Activated CD8-positive, alpha-beta T cell treated with anti-CD3 and anti-CD28 coated beads, Interleukin-2, amount 10 ng/mL, durations not matched to agents 7 days and 5 days (primary cell): ENCODE measurements at regions of chr5 and their contacts with region 1.

Region 1: GRCh38 chr5:96934708-96935558 is 947 bp upstream of the LNPEP start:
- DNase-seq: peak; percentile 96
- ATAC-seq: peak; percentile 77
- H3K4me3 Mint-ChIP-seq: peak overlapping the region; percentile 88
- H3K27ac Mint-ChIP-seq: peak overlapping the region; percentile 98
- H3K4me1 Mint-ChIP-seq: peaks cover 51% of the 10 kb centered on the region
- H3K27me3 Mint-ChIP-seq: no peaks in the 10 kb centered on the region

Region 2: GRCh38 chr5:96752341-96753016 is 182.5 kb before region 1 on chr5:
- CTCF ChIA-PET with region 1: no interaction called
- POLR2A ChIA-PET with region 1: no interaction called
- DNase-seq: peak; percentile 67
- ATAC-seq: no peak
- H3K4me3 Mint-ChIP-seq: no peak overlapping the region
- H3K27ac Mint-ChIP-seq: no peak overlapping the region
- H3K4me1 Mint-ChIP-seq: no peaks in the 10 kb centered on the region
- H3K27me3 Mint-ChIP-seq: no peaks in the 10 kb centered on the region

Region 3: DNA sequence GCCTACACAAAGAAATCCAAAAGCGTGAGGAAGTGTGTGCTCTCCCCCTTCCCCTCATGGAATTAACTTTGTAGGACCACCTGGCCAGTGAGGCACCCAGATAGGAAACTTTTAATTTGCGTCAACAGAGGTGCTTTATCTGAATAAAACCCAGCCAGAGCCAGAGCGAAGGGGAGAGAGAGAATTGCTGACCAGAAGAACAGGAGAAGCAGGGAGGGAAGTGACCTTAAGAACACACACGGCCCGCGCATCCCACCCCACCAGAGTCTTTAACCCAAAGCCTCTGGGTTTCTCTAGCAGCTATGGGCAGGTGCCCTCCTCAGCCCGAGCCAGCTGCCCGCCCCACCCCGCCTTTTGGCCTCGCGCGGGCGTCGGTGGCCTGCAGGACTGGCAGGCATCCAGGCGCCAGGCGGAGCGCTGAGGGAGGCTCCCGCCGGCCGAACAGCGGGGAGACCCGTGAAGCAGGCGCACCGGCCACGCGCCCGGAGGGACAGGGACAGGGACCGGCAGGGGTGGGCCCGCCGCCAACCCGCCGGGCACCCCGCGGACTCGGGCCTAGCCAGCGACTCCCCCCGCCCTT is 127.8 kb before region 1 on chr5:
- CTCF ChIA-PET with region 1: interaction called, 4 read pairs
- POLR2A ChIA-PET with region 1: interaction called, 13 read pairs
- DNase-seq: peak; percentile 54
- ATAC-seq: peak; percentile 28
- H3K4me3 Mint-ChIP-seq: peak overlapping the region; percentile 90
- H3K27ac Mint-ChIP-seq: peak overlapping the region; percentile 99
- H3K4me1 Mint-ChIP-seq: peaks cover 73% of the 10 kb centered on the region
- H3K27me3 Mint-ChIP-seq: no peaks in the 10 kb centered on the region

Region 4: DNA sequence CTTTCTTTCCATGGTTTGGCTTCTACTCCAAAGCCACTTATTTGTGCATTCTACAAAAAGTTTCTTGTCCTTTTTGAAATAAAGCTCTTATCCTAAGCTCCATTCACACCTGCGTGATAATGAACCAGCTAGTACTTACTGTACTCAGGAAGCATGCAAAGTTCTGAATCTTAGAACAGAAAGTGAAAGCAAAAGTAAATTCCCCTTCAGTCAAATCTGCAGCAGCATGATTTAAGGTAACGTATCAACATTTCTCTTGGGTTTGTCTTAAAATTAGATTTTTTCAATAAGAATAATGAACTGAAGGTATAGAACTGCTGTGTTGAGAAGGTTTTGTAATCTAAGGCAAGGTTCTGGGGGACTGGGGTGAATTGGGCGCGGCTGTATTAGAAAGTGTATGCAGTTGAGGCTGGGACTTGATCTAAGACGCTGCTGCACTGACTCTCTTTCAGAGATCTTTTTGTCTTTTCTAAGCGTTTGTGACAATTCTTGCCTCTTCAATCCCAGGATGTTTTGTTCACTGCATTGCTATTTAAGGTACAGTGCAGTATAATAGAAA is 58.6 kb before region 1 on chr5 and contains the start of gene ERAP2:
- CTCF ChIA-PET with region 1: interaction called, 6 read pairs
- POLR2A ChIA-PET with region 1: interaction called, 11 read pairs
- DNase-seq: no peak
- ATAC-seq: peak; percentile 73
- H3K4me3 Mint-ChIP-seq: peak within 1 kb of the TSS; percentile 98
- H3K27ac Mint-ChIP-seq: peak within 1 kb of the TSS; percentile 94
- H3K4me1 Mint-ChIP-seq: peaks cover 64% of the 10 kb centered on the region
- H3K27me3 Mint-ChIP-seq: no peaks in the 10 kb centered on the region
- total RNA-seq, gene ERAP2: 93.0 to 96.0 TPM

Region 5: DNA sequence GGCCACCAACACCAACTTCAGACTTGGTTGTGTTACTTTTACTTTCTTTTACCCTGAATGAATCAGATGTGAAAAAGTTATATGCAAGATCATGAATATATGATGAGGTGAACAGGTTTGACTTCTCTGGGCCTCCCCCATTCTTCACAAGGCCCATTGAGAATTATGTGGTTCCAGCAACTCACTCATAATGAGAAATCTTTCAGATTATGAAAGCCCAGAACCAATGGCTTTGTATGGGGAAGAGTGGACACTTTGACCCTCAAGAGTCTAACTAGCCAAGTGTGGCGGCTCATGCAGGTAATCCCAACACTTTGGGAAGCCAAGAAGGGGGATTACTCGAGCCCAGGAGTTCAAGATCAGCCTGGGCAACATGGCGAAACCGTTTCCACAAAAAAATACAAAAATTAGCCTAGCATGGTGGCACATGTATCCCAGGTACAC is 15.2 kb before region 1 on chr5:
- CTCF ChIA-PET with region 1: interaction called, 5 read pairs
- POLR2A ChIA-PET with region 1: interaction called, 10 read pairs
- DNase-seq: no peak
- ATAC-seq: no peak
- H3K4me3 Mint-ChIP-seq: no peak overlapping the region
- H3K27ac Mint-ChIP-seq: no peak overlapping the region
- H3K4me1 Mint-ChIP-seq: peaks cover 34% of the 10 kb centered on the region
- H3K27me3 Mint-ChIP-seq: no peaks in the 10 kb centered on the region

Region 6: GRCh38 chr5:96957254-96958049 is 22.5 kb after region 1 on chr5:
- CTCF ChIA-PET with region 1: interaction called, 17 read pairs
- POLR2A ChIA-PET with region 1: interaction called, 66 read pairs
- DNase-seq: no peak
- ATAC-seq: peak; percentile 11
- H3K4me3 Mint-ChIP-seq: peak overlapping the region; percentile 60
- H3K27ac Mint-ChIP-seq: peak overlapping the region; percentile 81
- H3K4me1 Mint-ChIP-seq: peaks cover 81% of the 10 kb centered on the region
- H3K27me3 Mint-ChIP-seq: no peaks in the 10 kb centered on the region

Region 7: DNA sequence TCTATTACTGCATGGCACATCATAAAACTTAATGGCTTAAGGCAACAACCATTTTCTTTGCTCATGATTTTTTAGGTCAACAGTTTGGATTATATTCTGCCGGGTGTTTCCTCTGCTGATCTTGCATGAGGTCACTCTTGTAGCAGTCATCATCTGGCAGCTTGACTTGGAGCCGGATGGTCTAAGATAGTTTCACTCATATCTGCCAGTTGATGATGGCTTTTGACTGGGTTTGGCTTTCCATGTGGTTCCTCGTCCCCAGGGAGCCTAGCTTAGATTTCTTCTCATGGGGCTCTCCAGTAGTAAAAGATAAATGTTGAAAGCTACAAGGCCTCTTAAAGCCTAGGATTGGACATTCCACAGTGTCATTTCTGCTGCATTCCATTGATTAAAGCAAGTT is 28.3 kb after region 1 on chr5:
- CTCF ChIA-PET with region 1: interaction called, 17 read pairs
- POLR2A ChIA-PET with region 1: interaction called, 66 read pairs
- DNase-seq: peak; percentile 65
- ATAC-seq: peak; percentile 60
- H3K4me3 Mint-ChIP-seq: peak overlapping the region; percentile 72
- H3K27ac Mint-ChIP-seq: peak overlapping the region; percentile 96
- H3K4me1 Mint-ChIP-seq: peaks cover 72% of the 10 kb centered on the region
- H3K27me3 Mint-ChIP-seq: no peaks in the 10 kb centered on the region